GM12878 (cell line): ENCODE measurements at regions of chr5 and their contacts with region 1.

Region 1: DNA sequence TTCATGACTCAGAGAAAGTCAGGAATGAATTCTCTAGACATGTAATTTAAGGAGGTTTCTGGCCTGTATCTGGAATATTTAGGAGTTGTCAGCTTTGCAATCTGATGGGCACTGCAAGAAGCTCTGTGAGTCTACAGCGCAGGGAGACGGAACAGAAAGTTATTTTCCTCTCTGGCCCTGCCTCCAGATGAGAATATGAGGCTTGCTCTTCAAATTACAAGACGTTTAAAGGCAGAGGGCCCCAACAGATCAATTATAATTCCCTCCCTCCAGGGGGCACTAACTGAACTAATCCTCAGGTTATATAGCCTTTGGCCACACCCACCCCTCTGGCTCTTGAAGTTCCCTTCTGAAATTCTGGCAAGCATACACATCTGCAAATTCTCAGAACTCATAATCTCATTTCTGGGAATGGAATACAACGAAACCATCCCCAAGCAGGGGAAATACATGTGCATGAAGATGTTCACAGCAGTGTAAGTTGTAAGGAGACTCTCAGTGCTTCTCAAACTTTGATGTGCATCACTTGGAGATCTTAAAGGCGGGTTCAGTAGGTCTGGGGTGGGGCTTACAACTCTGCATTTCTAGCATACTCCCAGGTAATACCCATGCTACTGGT is 307.6 kb downstream of the CWC27 start:
- DNase-seq: no peak
- ATAC-seq: peak; percentile 93
- H3K4me3 ChIP-seq: no peak overlapping the region
- H3K27ac ChIP-seq: no peak overlapping the region
- H3K4me1 ChIP-seq: peaks cover 17% of the 10 kb centered on the region
- H3K27me3 ChIP-seq: no peaks in the 10 kb centered on the region
- CTCF ChIP-seq: peak; percentile 35 to 54 (median 43)
- EP300 ChIP-seq: no peak
- POLR2A ChIP-seq: no peak
- RAD21 ChIP-seq: peak; percentile 66

Region 2: GRCh38 chr5:64811050-64811640 is 265.2 kb before region 1 on chr5:
- CTCF ChIA-PET with region 1: interaction called, 7 read pairs
- POLR2A ChIA-PET with region 1: no interaction called
- RAD21 ChIA-PET with region 1: interaction called, 3 read pairs
- SMC1A ChIA-PET with region 1: interaction called, 4 read pairs
- in situ Hi-C with region 1: no loop called
- intact Hi-C with region 1: loop called (anchors 10 kb)
- DNase-seq: peak; percentile 5
- ATAC-seq: peak; percentile 69
- H3K4me3 ChIP-seq: no peak overlapping the region
- H3K27ac ChIP-seq: no peak overlapping the region
- H3K4me1 ChIP-seq: peaks cover 12% of the 10 kb centered on the region
- H3K27me3 ChIP-seq: no peaks in the 10 kb centered on the region
- CTCF ChIP-seq: peak; percentile 54 to 72 (median 56); a peak in 5 of 6 replicates
- EP300 ChIP-seq: no peak
- POLR2A ChIP-seq: no peak
- RAD21 ChIP-seq: peak; percentile 92

Region 3: GRCh38 chr5:65086234-65086890 is 10.0 kb after region 1 on chr5:
- CTCF ChIA-PET with region 1: interaction called, 5 read pairs
- POLR2A ChIA-PET with region 1: interaction called, 5 read pairs
- RAD21 ChIA-PET with region 1: interaction called, 7 read pairs
- SMC1A ChIA-PET with region 1: interaction called, 15 read pairs
- in situ Hi-C with region 1: no loop called
- intact Hi-C with region 1: no loop called
- DNase-seq: no peak
- ATAC-seq: peak; percentile 47
- H3K4me3 ChIP-seq: no peak overlapping the region
- H3K27ac ChIP-seq: no peak overlapping the region
- H3K4me1 ChIP-seq: no peaks in the 10 kb centered on the region
- H3K27me3 ChIP-seq: no peaks in the 10 kb centered on the region
- CTCF ChIP-seq: no peak
- EP300 ChIP-seq: no peak
- POLR2A ChIP-seq: no peak
- RAD21 ChIP-seq: no peak